ENCODE measurements at regions of chr9 and their contacts with region 1.

Region 1: GRCh38 chr9:86405926-86406325 is 51.7 kb upstream of the TUT7 start:
- DNase-seq: peak in 3 of 10 donors; percentile 7 to 51 (median 42)
- H3K4me3 ChIP-seq: peak overlapping the region in 8 of 59 donors; percentile 3 to 26 (median 8)
- H3K27ac ChIP-seq: peak overlapping the region in 54 of 59 donors; percentile 7 to 91 (median 77)
- H3K27me3 ChIP-seq: no peaks in the 10 kb centered on the region
- CTCF ChIP-seq: no peak

Region 2: GRCh38 chr9:86257391-86257790 is 148.5 kb before region 1 on chr9:
- intact Hi-C with region 1: no loop called
- DNase-seq: no peak
- H3K4me3 ChIP-seq: no peak overlapping the region
- H3K27ac ChIP-seq: no peak overlapping the region
- H3K27me3 ChIP-seq: no peaks in the 10 kb centered on the region
- CTCF ChIP-seq: no peak

Region 3: GRCh38 chr9:87099407-87099806 is 693.5 kb after region 1 on chr9:
- intact Hi-C with region 1: no loop called
- DNase-seq: no peak
- H3K4me3 ChIP-seq: no peak overlapping the region
- H3K27ac ChIP-seq: no peak overlapping the region
- H3K27me3 ChIP-seq: no peaks in the 10 kb centered on the region
- CTCF ChIP-seq: no peak

Region 4: DNA sequence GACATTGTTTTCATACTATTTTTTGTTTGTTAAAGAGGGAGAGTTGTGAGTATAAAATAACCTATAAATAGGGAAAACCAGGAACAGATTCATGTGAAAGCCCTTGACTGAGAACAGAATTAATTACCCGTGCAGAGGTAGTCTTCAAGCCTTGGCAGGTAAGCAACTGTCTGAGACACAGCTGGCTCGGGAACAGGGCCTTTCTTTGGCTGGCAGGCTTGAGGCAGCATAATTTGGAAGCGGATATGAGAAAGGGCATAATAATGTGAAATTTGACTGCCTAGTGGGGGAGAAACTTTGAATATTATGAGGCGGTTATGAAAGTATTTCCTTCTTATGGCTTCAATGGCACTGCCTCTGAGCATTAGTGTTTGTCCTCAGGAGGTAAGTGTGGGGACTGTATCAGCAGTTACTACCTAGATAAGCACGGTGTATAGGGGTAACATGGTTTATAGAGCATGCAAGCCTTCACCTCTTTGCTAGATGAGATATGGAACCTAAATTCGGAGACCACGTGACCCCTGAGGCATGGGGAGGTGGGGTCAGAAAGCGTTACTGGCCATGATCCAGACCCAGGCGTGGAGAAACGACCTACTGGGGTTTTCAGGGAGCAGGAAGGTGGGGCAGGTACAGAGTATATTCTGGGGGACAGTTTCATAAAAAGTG is 751.6 kb after region 1 on chr9:
- intact Hi-C with region 1: loop called in 1 of 2 experiments (anchors 10 kb)
- DNase-seq: no peak
- H3K4me3 ChIP-seq: no peak overlapping the region
- H3K27ac ChIP-seq: no peak overlapping the region
- H3K27me3 ChIP-seq: no peaks in the 10 kb centered on the region
- CTCF ChIP-seq: no peak

Measured in dorsolateral prefrontal cortex (tissue), 120 donors.